Ovary (tissue), 10 donors: ENCODE measurements at regions of chr2 and their contacts with region 1.

Region 1: DNA sequence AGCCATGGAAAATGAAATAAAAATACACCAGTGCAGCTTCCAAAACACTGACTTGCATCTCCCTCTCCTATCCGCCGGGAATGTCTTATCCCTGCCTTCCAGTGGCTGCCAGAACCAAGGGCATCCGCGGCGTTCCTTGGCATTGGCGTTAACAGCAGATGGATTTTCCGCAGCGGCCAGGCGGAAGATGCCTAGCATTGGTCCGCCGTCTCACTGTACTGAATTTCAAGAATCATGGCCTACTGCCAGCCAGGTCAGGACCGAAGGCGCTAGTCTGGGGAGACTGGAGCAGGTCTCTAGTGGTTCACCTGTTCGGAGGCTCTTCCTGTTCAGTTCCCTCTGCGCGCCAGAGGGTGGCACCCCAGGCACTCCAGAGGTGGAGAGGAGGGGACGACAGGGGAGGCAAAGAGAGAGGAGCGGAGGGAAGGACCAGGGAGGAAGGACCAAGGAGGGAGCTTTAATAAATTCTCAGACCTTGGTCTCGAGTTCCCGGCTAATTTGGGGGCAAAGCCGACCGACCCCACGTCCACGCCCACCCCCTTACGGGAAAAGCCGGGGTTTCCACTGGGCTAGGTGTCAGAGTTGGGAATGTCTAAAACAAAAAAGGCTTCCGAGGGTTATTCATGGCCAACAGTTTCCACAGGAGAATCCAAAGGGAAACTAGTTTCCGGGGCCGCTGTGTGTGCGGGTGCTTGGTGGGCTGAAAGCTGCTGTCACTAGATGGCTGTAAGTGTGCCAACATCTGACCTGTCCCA is 3.7 kb upstream of the BCL2L11 start:
- DNase-seq: peak; percentile 67 to 79 (median 76)
- H3K4me3 ChIP-seq: peak overlapping the region; percentile 27
- H3K27ac ChIP-seq: no peak overlapping the region
- H3K4me1 ChIP-seq: peaks cover 7% of the 10 kb centered on the region
- H3K27me3 ChIP-seq: no peaks in the 10 kb centered on the region
- CTCF ChIP-seq: peak; percentile 66 to 75 (median 69)
- EP300 ChIP-seq: no peak
- POLR2A ChIP-seq: no peak

Region 2: DNA sequence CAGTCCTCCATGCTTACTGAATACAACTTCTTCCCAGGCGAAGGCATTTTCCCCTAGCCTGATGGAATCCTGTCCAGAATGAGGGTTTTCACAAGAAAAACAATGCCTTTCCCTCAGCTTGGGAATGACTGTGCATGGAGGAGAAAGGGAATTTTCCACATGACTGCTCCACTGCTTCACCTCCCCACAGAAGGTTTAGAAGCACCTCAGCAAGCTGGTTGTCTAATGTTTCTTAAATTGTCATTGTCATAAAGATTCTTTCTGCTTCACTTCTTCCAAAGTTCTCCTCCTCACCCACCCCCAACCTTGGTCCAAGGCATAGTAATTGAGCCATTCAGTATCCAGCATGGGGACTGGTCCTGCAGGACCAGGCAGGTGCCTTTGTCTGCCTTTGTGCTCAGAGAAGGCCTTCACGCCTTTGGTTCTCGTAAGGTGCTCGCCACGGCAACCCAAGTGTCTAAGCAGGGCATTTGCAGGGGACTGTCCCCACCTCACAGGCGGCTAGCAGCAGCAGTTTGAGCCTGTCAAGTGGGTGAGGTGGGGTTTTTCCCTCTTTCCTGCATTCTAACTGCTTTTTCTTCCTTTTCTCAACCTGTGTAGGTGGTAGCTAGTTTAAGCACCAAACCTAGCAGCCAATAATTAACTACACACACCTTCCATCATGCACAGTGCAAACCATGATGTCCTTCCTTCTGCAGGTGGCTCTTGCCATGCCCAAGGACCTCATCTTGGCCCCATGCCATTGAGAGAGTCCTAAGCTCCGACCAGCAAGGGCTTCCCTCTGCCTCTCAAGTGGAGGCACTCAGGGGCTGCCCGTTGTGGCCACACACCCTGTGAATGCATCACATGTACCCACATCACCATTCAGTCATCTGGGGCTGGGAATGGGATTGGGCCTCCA is 62.0 kb before region 1 on chr2:
- intact Hi-C with region 1: no loop called
- DNase-seq: no peak
- H3K4me3 ChIP-seq: no peak overlapping the region
- H3K27ac ChIP-seq: no peak overlapping the region
- H3K4me1 ChIP-seq: no peaks in the 10 kb centered on the region
- H3K27me3 ChIP-seq: no peaks in the 10 kb centered on the region
- CTCF ChIP-seq: no peak
- EP300 ChIP-seq: no peak
- POLR2A ChIP-seq: no peak

Region 3: GRCh38 chr2:111667542-111668273 is 550.7 kb after region 1 on chr2:
- intact Hi-C with region 1: loop called in 1 of 4 experiments (anchors 10 kb)
- DNase-seq: no peak
- H3K4me3 ChIP-seq: no peak overlapping the region
- H3K27ac ChIP-seq: no peak overlapping the region
- H3K4me1 ChIP-seq: no peaks in the 10 kb centered on the region
- H3K27me3 ChIP-seq: no peaks in the 10 kb centered on the region
- CTCF ChIP-seq: peak in 1 of 3 donors; percentile 22
- EP300 ChIP-seq: no peak
- POLR2A ChIP-seq: no peak